A673 (cell line): ENCODE measurements at regions of chr12 and their contacts with region 1.

Region 1: GRCh38 chr12:94074980-94075928 is 73.1 kb upstream of the PLXNC1 start:
- DNase-seq: peak; percentile 84
- H3K4me3 ChIP-seq: no peak overlapping the region
- H3K27ac ChIP-seq: no peak overlapping the region
- H3K4me1 ChIP-seq: peaks cover 26% of the 10 kb centered on the region
- H3K27me3 ChIP-seq: no peaks in the 10 kb centered on the region
- CTCF ChIP-seq: peak; percentile 78

Region 2: GRCh38 chr12:92702754-92703679 is 1372.2 kb before region 1 on chr12 and contains the start of gene PLEKHG7:
- CTCF ChIA-PET with region 1: interaction called, 19 read pairs
- POLR2A ChIA-PET with region 1: no interaction called
- intact Hi-C with region 1: no loop called
- DNase-seq: no peak
- H3K4me3 ChIP-seq: no peak within 1 kb of the TSS
- H3K27ac ChIP-seq: no peak within 1 kb of the TSS
- H3K4me1 ChIP-seq: no peaks in the 10 kb centered on the region
- H3K27me3 ChIP-seq: no peaks in the 10 kb centered on the region
- CTCF ChIP-seq: no peak
- total RNA-seq, gene PLEKHG7: not detected in 2 replicates

Region 3: DNA sequence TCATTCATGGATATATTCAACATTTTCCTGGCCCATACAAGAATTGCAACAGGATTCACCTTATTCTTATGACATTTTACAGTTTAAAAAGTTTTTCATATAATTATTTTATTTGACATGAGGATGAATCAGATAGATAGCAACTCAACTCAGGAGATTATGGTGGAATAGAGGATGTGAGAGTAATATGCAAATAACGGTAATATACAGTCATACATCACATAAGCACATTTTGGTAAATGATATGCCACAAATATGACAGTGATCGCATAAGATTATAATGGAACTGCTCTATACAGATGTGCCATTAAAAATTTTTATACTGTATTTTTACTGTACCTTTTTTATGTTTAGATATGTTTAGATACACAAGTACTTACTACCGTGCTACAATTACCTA is 422.2 kb before region 1 on chr12:
- CTCF ChIA-PET with region 1: no interaction called
- POLR2A ChIA-PET with region 1: no interaction called
- intact Hi-C with region 1: no loop called
- DNase-seq: no peak
- H3K4me3 ChIP-seq: no peak overlapping the region
- H3K27ac ChIP-seq: no peak overlapping the region
- H3K4me1 ChIP-seq: no peaks in the 10 kb centered on the region
- H3K27me3 ChIP-seq: no peaks in the 10 kb centered on the region
- CTCF ChIP-seq: no peak

Region 4: DNA sequence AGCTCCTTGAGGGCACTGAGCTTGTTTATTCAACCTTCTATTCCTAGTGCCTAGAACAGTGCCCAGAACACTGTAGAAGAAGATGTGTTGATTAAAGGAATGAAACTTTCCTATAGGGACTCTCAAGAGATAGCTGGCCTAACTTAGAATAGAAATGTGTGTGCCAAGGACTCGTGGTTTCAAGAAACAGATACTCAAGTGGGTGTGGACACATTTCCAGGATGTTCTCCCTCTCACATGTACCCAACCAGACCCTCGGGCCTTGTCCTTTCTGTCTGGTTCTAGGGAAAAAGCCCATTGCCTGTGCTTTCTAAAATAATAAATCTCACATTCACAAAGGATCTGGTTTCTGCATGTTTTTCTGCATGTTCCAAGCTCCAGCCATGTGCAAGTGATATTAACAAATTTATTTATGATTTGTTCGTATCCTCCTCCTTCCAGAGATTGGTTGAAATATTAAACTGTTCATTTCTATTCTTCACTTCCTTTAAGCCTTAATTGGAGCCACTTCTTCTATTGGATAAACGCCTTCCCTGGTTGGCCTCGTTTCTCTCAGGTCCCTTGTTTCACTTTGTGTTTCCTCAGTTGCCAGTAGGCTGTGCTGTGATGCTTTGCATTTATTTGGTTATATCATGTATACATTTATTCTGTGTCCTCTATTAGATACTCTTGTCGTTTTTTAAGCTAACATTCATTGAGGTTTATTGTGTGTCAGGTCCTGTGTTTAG is 308.3 kb before region 1 on chr12:
- CTCF ChIA-PET with region 1: interaction called, 16 read pairs
- POLR2A ChIA-PET with region 1: no interaction called
- intact Hi-C with region 1: loop called (anchors 10 kb)
- DNase-seq: peak; percentile 74
- H3K4me3 ChIP-seq: no peak overlapping the region
- H3K27ac ChIP-seq: no peak overlapping the region
- H3K4me1 ChIP-seq: peaks cover 16% of the 10 kb centered on the region
- H3K27me3 ChIP-seq: no peaks in the 10 kb centered on the region
- CTCF ChIP-seq: peak; percentile 77

Region 5: DNA sequence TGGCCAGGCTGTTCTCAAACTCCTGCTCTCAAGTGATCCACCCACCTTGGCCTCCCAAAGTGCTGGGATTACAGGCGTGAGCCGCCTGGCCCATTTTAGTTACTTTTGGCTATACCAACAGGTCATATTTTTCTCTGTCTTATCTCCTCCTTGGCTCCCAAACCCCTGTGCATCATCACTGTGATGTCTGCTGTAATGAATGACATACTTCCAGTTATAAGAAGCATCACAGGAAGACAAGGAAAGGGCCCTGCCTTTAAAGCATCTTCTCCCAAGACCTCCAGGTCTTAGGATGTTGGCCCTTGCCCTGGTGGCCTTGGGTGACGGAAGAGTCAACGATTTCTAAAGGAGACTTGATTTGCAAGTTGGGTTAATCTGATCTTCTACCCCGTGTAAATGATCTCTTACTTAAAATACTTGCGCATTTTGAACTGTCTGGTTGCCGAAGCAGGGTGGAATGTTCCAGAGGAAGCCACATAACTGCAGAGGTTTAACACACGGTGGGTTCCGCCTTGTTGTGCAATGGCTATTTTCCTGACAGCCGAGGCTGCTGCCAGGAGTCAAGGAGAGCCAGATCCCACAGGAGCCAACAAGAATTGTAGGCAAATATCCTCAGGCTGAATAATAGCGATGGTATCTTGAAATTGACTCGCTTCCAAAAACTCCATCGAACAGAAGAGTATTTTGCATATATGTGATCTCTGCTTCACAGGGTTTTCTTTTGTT is 17.4 kb after region 1 on chr12:
- CTCF ChIA-PET with region 1: no interaction called
- POLR2A ChIA-PET with region 1: no interaction called
- intact Hi-C with region 1: no loop called
- DNase-seq: no peak
- H3K4me3 ChIP-seq: no peak overlapping the region
- H3K27ac ChIP-seq: no peak overlapping the region
- H3K4me1 ChIP-seq: no peaks in the 10 kb centered on the region
- H3K27me3 ChIP-seq: no peaks in the 10 kb centered on the region
- CTCF ChIP-seq: no peak